Ovary (tissue), 10 donors: ENCODE measurements at regions of chr6 and their contacts with region 1.

Region 1: GRCh38 chr6:29942275-29943052 is at the start of gene HLA-A:
- DNase-seq: peak; percentile 91 to 96 (median 92)
- H3K4me3 ChIP-seq: peak within 1 kb of the TSS; percentile 73
- H3K27ac ChIP-seq: peak within 1 kb of the TSS; percentile 57 to 62
- H3K4me1 ChIP-seq: peaks cover 5% of the 10 kb centered on the region
- H3K27me3 ChIP-seq: no peaks in the 10 kb centered on the region
- CTCF ChIP-seq: no peak
- EP300 ChIP-seq: no peak
- POLR2A ChIP-seq: peak; percentile 95
- total RNA-seq, gene HLA-A: 269 to 430 (median 310) TPM

Region 2: DNA sequence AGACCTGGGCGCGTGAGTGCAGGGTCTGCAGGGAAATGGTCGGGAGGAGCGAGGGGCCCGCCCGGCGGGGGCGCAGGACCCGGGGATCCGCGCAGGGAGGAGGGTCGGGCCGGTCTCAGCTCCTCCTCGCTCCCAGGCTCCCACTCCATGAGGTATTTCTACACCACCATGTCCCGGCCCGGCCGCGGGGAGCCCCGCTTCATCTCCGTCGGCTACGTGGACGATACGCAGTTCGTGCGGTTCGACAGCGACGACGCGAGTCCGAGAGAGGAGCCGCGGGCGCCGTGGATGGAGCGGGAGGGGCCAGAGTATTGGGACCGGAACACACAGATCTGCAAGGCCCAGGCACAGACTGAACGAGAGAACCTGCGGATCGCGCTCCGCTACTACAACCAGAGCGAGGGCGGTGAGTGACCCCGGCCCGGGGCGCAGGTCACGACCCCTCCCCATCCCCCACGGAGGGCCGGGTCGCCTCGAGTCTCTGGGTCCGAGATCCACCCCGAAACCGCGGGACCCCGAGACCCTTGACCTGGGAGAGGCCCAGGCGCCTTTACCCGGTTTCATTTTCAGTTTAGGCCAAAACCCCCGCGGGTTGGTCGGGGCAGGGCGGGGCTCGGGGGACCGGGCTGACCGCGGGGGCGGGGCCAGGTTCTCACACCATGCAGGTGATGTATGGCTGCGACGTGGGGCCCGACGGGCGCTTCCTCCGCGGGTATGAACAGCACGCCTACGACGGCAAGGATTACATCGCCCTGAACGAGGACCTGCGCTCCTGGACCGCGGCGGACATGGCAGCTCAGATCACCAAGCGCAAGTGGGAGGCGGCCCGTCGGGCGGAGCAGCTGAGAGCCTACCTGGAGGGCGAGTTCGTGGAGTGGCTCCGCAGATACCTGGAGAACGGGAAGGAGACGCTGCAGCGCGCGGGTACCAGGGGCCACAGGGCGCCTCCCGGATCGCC is 54.4 kb before region 1 on chr6:
- intact Hi-C with region 1: loop called in 1 of 4 experiments (anchors 10 kb)
- DNase-seq: peak; percentile 85 to 87 (median 86)
- H3K4me3 ChIP-seq: peak overlapping the region; percentile 83
- H3K27ac ChIP-seq: peak overlapping the region in 1 of 2 donors; percentile 99
- H3K4me1 ChIP-seq: peaks cover 2% of the 10 kb centered on the region
- H3K27me3 ChIP-seq: no peaks in the 10 kb centered on the region
- CTCF ChIP-seq: peak in 1 of 3 donors; percentile 15
- EP300 ChIP-seq: no peak
- POLR2A ChIP-seq: peak; percentile 26

Region 3: GRCh38 chr6:29976588-29977424 is 34.3 kb after region 1 on chr6:
- intact Hi-C with region 1: loop called in 1 of 4 experiments (anchors 1 kb)
- DNase-seq: peak; percentile 83 to 88 (median 85)
- H3K4me3 ChIP-seq: peak overlapping the region; percentile 43
- H3K27ac ChIP-seq: peak overlapping the region; percentile 66 to 95
- H3K4me1 ChIP-seq: peaks cover 6% of the 10 kb centered on the region
- H3K27me3 ChIP-seq: no peaks in the 10 kb centered on the region
- CTCF ChIP-seq: peak in 1 of 3 donors; percentile 44
- EP300 ChIP-seq: no peak
- POLR2A ChIP-seq: peak; percentile 51